HepG2 (cell line): ENCODE measurements at regions of chr6 and their contacts with region 1.

Region 1: DNA sequence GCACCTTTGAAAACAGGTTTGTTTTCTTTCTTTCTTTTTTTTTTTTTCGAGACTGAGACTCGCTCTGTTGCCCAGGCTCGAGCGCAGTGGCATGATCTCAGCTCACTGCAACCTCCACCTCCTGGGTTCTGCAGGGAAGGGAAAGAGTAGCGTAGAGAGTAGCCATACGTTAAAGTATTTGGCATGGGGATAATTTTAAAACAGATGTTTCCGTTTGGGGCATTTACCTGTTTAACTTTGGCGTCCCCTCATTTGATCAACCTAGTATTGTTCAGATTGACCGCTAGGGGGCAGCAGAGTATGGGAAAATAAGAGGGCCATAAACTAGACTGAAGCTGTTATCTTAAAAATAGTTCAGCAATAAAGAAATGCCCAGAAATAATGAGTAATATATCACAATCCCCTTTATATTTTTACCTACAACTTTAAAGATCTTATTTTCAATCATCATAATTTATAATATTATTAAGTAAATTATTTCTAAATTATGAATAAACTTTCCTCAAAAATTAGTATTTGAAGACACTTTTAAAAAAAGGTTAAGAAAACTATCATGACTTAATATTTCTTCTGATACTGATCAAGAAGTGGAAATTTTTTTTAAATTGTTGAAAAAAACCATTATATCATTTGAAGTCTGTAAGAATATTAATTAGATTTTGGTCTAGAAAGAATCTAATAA is 7.6 kb upstream of the TAAR9 start:
- DNase-seq: peak; percentile 72
- ATAC-seq: peak; percentile 90
- H3K4me3 ChIP-seq: peak overlapping the region in 2 of 3 experiments; percentile 29 to 58; a peak in 4 of 6 replicates
- H3K27ac ChIP-seq: no peak overlapping the region
- H3K4me1 ChIP-seq: peaks cover 25% of the 10 kb centered on the region
- H3K27me3 ChIP-seq: peaks cover 0 to 6% of the 10 kb centered on the region in 2 experiments; a peak in 2 of 5 replicates
- CTCF ChIP-seq: peak; percentile 81
- EP300 ChIP-seq: no peak
- POLR2A ChIP-seq: no peak
- RAD21 ChIP-seq: peak; percentile 68; the same call in 1 of the 2 replicates

Region 2: GRCh38 chr6:132569170-132569569 is 38.7 kb after region 1 on chr6:
- CTCF ChIA-PET with region 1: no interaction called
- POLR2A ChIA-PET with region 1: no interaction called
- in situ Hi-C with region 1: no loop called
- intact Hi-C with region 1: no loop called
- DNase-seq: no peak
- ATAC-seq: no peak
- H3K4me3 ChIP-seq: no peak overlapping the region
- H3K27ac ChIP-seq: no peak overlapping the region
- H3K4me1 ChIP-seq: no peaks in the 10 kb centered on the region
- H3K27me3 ChIP-seq: no peaks in the 10 kb centered on the region; a peak in 1 of 5 replicates
- CTCF ChIP-seq: no peak
- EP300 ChIP-seq: no peak
- POLR2A ChIP-seq: no peak
- RAD21 ChIP-seq: no peak

Region 3: DNA sequence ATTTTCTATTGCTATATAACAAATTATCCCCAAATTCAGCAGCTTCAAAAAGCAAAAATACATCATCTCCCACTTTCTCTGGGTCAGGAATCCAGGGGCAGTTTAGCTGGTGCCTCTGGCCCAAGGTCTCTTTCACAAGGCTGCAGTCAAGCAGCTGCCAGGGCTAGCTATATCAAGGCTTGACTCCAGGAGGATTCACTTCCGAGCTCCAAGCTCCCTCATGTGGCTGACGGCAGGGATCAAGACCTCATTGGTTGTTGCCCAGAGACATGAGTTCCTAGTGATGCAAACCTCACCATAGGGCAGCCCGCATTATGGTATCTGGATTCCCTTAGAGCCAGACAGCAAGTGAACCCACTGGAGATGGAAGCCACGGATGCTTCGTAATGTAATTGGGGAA is 184.8 kb after region 1 on chr6:
- CTCF ChIA-PET with region 1: interaction called, 5 read pairs
- POLR2A ChIA-PET with region 1: no interaction called
- in situ Hi-C with region 1: no loop called
- intact Hi-C with region 1: loop called (anchors 1 kb)
- DNase-seq: peak; percentile 65
- ATAC-seq: peak; percentile 97
- H3K4me3 ChIP-seq: no peak overlapping the region
- H3K27ac ChIP-seq: no peak overlapping the region
- H3K4me1 ChIP-seq: peaks cover 29% of the 10 kb centered on the region
- H3K27me3 ChIP-seq: no peaks in the 10 kb centered on the region
- CTCF ChIP-seq: peak; percentile 86
- EP300 ChIP-seq: no peak
- POLR2A ChIP-seq: no peak
- RAD21 ChIP-seq: peak; percentile 75

Region 4: DNA sequence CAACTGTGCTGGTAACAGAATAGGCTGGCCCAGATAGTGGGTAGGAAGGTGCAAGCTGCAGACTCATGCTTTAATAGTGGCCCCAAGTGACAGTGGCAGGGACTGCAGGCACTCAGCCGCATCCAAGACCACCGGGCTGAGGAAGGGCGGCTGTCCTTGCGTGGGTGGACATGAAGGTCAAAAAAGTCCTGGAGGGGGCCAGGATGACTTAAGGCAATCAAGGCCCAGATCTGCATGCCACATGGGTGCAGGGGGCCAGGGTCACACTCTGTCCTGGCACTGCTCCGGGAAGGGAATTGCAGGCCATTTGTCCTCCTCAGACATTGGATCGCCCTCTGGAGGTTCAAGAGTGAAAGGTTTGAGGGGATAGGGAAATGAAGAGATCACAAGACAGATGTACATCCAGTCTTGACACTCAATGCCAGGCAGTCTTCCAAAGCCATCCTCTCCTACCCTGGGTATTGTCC is 237.7 kb after region 1 on chr6:
- CTCF ChIA-PET with region 1: interaction called, 28 read pairs
- POLR2A ChIA-PET with region 1: no interaction called
- in situ Hi-C with region 1: loop called (anchors 5 kb)
- intact Hi-C with region 1: loop called (anchors 1 kb)
- DNase-seq: peak; percentile 55
- ATAC-seq: peak; percentile 100
- H3K4me3 ChIP-seq: peak overlapping the region; percentile 10 to 68 (median 29); a peak in 4 of 6 replicates
- H3K27ac ChIP-seq: no peak overlapping the region
- H3K4me1 ChIP-seq: no peaks in the 10 kb centered on the region
- H3K27me3 ChIP-seq: no peaks in the 10 kb centered on the region
- CTCF ChIP-seq: peak; percentile 92
- EP300 ChIP-seq: no peak
- POLR2A ChIP-seq: no peak
- RAD21 ChIP-seq: peak; percentile 93

Region 5: GRCh38 chr6:132798869-132799538 is 268.6 kb after region 1 on chr6:
- CTCF ChIA-PET with region 1: interaction called, 10 read pairs
- POLR2A ChIA-PET with region 1: no interaction called
- in situ Hi-C with region 1: no loop called
- intact Hi-C with region 1: loop called (anchors 10 kb)
- DNase-seq: peak; percentile 83
- ATAC-seq: no peak
- H3K4me3 ChIP-seq: peak overlapping the region in 2 of 3 experiments; percentile 84 to 89; a peak in 4 of 6 replicates
- H3K27ac ChIP-seq: peak overlapping the region; percentile 45
- H3K4me1 ChIP-seq: 0 out of 2 replicates have a peak, but pooled peaks cover 4% of the 10 kb centered on the region
- H3K27me3 ChIP-seq: no peaks in the 10 kb centered on the region
- CTCF ChIP-seq: peak; percentile 93
- EP300 ChIP-seq: no peak
- POLR2A ChIP-seq: peak in 1 of 2 experiments; percentile 21; a peak in 1 of 4 replicates
- RAD21 ChIP-seq: no peak; the same call in 1 of the 2 replicates

Region 6: DNA sequence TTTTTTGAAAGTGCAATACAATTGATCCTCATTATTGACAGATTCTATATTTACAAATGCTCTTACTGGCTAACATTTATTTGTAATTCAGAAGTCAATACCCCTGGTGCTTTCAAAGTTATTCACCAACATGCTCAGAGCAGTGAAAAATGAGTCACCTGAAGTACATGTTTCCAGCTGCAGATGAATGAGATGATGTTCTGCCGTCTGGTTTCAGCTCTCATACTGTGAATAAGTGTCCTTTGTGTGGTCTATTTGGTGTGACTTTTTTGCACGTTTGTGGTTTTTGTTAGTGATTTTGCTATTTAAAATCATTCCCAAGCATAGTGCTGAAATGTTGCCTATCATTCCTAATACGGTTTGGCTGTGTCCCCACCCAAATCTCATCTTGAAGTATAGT is 688.4 kb after region 1 on chr6:
- CTCF ChIA-PET with region 1: no interaction called
- POLR2A ChIA-PET with region 1: no interaction called
- in situ Hi-C with region 1: no loop called
- intact Hi-C with region 1: no loop called
- DNase-seq: no peak
- ATAC-seq: no peak
- H3K4me3 ChIP-seq: no peak overlapping the region
- H3K27ac ChIP-seq: no peak overlapping the region
- H3K4me1 ChIP-seq: no peaks in the 10 kb centered on the region
- H3K27me3 ChIP-seq: no peaks in the 10 kb centered on the region
- CTCF ChIP-seq: no peak
- EP300 ChIP-seq: no peak
- POLR2A ChIP-seq: no peak
- RAD21 ChIP-seq: no peak